ENCODE measurements at regions of chr6 and their contacts with region 1.

Region 1: DNA sequence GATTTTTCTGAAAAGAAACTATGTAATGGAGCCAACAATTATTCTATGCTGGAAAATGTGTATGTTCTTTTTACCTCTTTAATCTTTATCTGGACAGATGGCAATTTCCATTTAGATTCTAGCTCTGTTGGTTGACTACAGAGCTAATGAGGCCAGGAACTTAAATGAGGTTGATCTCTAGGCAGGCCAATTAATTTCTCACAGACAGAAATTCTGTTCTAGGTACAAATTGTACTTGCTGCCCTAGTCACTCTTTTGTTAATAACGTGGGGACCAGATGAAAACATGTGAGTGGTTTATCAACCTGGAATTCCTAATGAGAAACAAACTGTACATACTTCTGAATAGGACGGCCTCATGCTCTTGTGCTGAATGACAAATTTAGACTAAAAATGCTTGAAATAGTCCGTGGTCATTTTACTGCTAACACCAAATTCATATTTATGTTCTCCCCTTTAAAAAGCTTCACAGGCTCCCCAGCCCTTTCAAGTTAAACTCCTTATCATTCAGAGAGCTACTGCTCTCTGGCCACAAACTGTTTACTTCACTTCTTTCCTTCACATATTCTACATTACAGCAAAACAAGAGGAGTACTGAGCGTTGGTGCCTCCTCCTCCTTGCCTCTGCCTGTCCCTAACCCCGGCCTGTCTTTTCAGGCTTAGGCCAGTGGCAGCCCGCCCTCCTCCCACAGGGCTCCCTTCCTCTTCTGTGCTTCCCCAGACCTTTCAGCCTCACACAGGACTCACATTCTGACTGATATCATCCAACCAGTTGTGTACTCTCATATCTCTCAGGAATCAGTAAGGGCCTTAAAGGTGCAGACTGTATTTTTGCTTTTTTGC is 41.4 kb downstream of the DTNBP1 start:
- DNase-seq: peak; percentile 31 to 33
- ATAC-seq: peak; percentile 26

Region 2: GRCh38 chr6:15491255-15491985 is 130.0 kb before region 1 on chr6:
- intact Hi-C with region 1: loop called in 1 of 2 experiments (anchors 10 kb)
- DNase-seq: peak in 1 of 2 donors; percentile 69
- ATAC-seq: peak; percentile 79

Region 3: GRCh38 chr6:15715060-15715459 is 93.6 kb after region 1 on chr6:
- intact Hi-C with region 1: no loop called
- DNase-seq: no peak
- ATAC-seq: no peak

Measured in left colon (tissue), 2 donors.